ENCODE measurements at regions of chr11 and their contacts with region 1.

Region 1: GRCh38 chr11:86193297-86194095 is 51.1 kb upstream of the EED start:
- DNase-seq: peak; percentile 78
- ATAC-seq: peak; percentile 97
- H3K4me3 ChIP-seq: peak overlapping the region; percentile 49; the same call in 1 of the 2 replicates
- H3K27ac ChIP-seq: peak overlapping the region; percentile 34
- H3K4me1 ChIP-seq: peaks cover 14% of the 10 kb centered on the region
- H3K27me3 ChIP-seq: no peaks in the 10 kb centered on the region
- CTCF ChIP-seq: peak; percentile 65 to 83 (median 76)
- EP300 ChIP-seq: peak in 1 of 2 experiments; percentile 48; a peak in 1 of 4 replicates
- POLR2A ChIP-seq: no peak
- RAD21 ChIP-seq: peak; percentile 85

Region 2: DNA sequence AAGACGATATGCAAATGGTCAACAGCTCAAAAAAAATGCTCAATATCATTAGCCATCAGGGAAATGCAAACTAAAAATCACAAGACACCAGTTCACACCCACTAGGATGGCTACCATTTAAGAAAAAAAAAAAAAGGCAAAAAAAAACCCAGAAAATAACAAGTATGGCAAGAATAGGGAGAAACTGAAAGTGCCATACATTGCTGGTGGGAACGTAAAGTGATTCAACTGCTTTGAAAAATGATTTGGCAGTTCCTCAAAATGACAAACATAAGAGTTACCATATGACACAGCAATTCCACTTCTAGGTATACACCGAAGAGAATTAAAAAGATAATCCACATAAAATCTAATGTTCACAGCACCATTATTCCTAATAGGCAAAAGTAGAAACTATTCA is 172.1 kb before region 1 on chr11:
- CTCF ChIA-PET with region 1: interaction called, 10 read pairs
- POLR2A ChIA-PET with region 1: no interaction called
- RAD21 ChIA-PET with region 1: no interaction called
- SMC1A ChIA-PET with region 1: interaction called, 16 read pairs
- in situ Hi-C with region 1: no loop called
- intact Hi-C with region 1: no loop called
- DNase-seq: peak; percentile 55
- ATAC-seq: peak; percentile 90
- H3K4me3 ChIP-seq: no peak overlapping the region
- H3K27ac ChIP-seq: no peak overlapping the region
- H3K4me1 ChIP-seq: peaks cover 2% of the 10 kb centered on the region; the same call in 1 of the 2 replicates
- H3K27me3 ChIP-seq: no peaks in the 10 kb centered on the region
- CTCF ChIP-seq: no peak
- EP300 ChIP-seq: peak in 1 of 2 experiments; percentile 43; a peak in 1 of 4 replicates
- POLR2A ChIP-seq: no peak
- RAD21 ChIP-seq: no peak

Region 3: DNA sequence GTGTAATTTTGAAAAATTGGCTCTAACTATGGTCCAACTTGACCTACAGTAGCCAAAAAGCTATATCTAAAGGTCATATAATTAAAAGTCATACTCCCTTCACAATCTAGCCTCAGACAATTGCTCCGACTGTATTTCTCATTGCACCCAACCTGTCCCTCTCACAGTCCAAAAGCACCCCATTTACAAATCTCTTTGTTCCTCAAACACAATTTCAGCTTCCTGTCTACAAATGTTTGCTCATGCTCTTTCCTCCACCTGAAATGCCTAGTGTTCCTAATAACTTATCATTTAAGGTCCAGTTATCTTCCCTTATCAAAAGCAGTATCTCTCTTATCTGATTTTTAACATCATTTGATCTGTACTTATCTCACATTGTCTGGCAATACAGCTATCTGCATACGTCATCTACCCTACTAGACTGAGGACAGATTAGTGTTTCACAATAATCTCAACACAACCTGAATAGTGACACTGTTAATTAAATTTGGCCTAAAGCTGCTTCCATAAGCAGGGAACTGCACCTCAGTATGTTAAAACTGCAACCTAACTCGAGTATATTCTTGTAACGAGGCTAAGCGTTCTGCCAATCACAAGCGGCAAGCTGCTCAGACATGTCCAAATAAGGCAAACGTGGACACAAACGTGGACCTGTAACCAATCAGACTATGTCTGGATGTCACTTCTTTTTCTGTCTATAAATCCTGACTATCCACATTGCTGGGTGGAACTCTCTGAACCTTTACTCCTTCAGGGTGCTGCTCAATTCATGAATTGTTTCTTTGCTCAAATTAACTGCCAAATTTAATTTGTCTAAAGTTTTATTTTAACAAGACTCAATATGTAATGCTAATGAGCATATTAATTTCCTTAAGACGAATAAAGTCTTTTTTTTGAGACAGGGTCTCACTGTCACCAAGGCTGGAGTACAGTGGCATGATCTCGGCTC is 140.5 kb before region 1 on chr11:
- CTCF ChIA-PET with region 1: interaction called, 11 read pairs
- POLR2A ChIA-PET with region 1: interaction called, 5 read pairs
- RAD21 ChIA-PET with region 1: interaction called, 4 read pairs
- SMC1A ChIA-PET with region 1: interaction called, 11 read pairs
- in situ Hi-C with region 1: no loop called
- intact Hi-C with region 1: no loop called
- DNase-seq: no peak
- ATAC-seq: no peak
- H3K4me3 ChIP-seq: no peak overlapping the region
- H3K27ac ChIP-seq: peak overlapping the region; percentile 26; the same call in 1 of the 2 replicates
- H3K4me1 ChIP-seq: peaks cover 11% of the 10 kb centered on the region
- H3K27me3 ChIP-seq: no peaks in the 10 kb centered on the region
- CTCF ChIP-seq: no peak
- EP300 ChIP-seq: no peak
- POLR2A ChIP-seq: no peak
- RAD21 ChIP-seq: no peak

Region 4: GRCh38 chr11:86124834-86125233 is 68.7 kb before region 1 on chr11:
- CTCF ChIA-PET with region 1: interaction called, 7 read pairs
- POLR2A ChIA-PET with region 1: no interaction called
- RAD21 ChIA-PET with region 1: interaction called, 4 read pairs
- SMC1A ChIA-PET with region 1: interaction called, 15 read pairs
- in situ Hi-C with region 1: no loop called
- intact Hi-C with region 1: no loop called
- DNase-seq: no peak
- ATAC-seq: peak; percentile 89
- H3K4me3 ChIP-seq: no peak overlapping the region
- H3K27ac ChIP-seq: no peak overlapping the region
- H3K4me1 ChIP-seq: peaks cover 11% of the 10 kb centered on the region
- H3K27me3 ChIP-seq: no peaks in the 10 kb centered on the region
- CTCF ChIP-seq: no peak
- EP300 ChIP-seq: no peak; a peak in 1 of 4 replicates
- POLR2A ChIP-seq: no peak
- RAD21 ChIP-seq: no peak

Region 5: GRCh38 chr11:86174101-86175046 is 19.1 kb before region 1 on chr11:
- CTCF ChIA-PET with region 1: interaction called, 4 read pairs
- POLR2A ChIA-PET with region 1: no interaction called
- RAD21 ChIA-PET with region 1: interaction called, 3 read pairs
- SMC1A ChIA-PET with region 1: interaction called, 12 read pairs
- in situ Hi-C with region 1: no loop called
- intact Hi-C with region 1: no loop called
- DNase-seq: no peak
- ATAC-seq: no peak
- H3K4me3 ChIP-seq: no peak overlapping the region
- H3K27ac ChIP-seq: no peak overlapping the region
- H3K4me1 ChIP-seq: no peaks in the 10 kb centered on the region
- H3K27me3 ChIP-seq: no peaks in the 10 kb centered on the region
- CTCF ChIP-seq: no peak
- EP300 ChIP-seq: no peak
- POLR2A ChIP-seq: no peak
- RAD21 ChIP-seq: no peak

Region 6: GRCh38 chr11:86244522-86245368 is 51.2 kb after region 1 on chr11 and contains the start of gene EED:
- CTCF ChIA-PET with region 1: interaction called, 7 read pairs
- POLR2A ChIA-PET with region 1: no interaction called
- RAD21 ChIA-PET with region 1: interaction called, 8 read pairs
- SMC1A ChIA-PET with region 1: interaction called, 11 read pairs
- in situ Hi-C with region 1: no loop called
- intact Hi-C with region 1: no loop called
- DNase-seq: peak; percentile 86
- ATAC-seq: peak; percentile 77
- H3K4me3 ChIP-seq: peak within 1 kb of the TSS; percentile 81
- H3K27ac ChIP-seq: peak within 1 kb of the TSS; percentile 98
- H3K4me1 ChIP-seq: peaks cover 12% of the 10 kb centered on the region
- H3K27me3 ChIP-seq: no peaks in the 10 kb centered on the region
- CTCF ChIP-seq: no peak
- EP300 ChIP-seq: peak in 1 of 2 experiments; percentile 25; a peak in 1 of 4 replicates
- POLR2A ChIP-seq: peak; percentile 80
- RAD21 ChIP-seq: no peak
- polyA plus RNA-seq, gene EED: 101 to 140 TPM